ENCODE measurements at regions of chr3 and their contacts with region 1.

Region 1: GRCh38 chr3:109275702-109276293 is 40.5 kb downstream of the DPPA2 start:
- DNase-seq: peak; percentile 42
- ATAC-seq: peak; percentile 91
- H3K4me3 ChIP-seq: no peak overlapping the region
- H3K27ac ChIP-seq: no peak overlapping the region
- H3K4me1 ChIP-seq: no peaks in the 10 kb centered on the region
- H3K27me3 ChIP-seq: no peaks in the 10 kb centered on the region
- CTCF ChIP-seq: peak; percentile 76
- EP300 ChIP-seq: no peak
- POLR2A ChIP-seq: no peak
- RAD21 ChIP-seq: 0 out of 2 replicates have a peak, but pooled peaks have one; percentile 33

Region 2: DNA sequence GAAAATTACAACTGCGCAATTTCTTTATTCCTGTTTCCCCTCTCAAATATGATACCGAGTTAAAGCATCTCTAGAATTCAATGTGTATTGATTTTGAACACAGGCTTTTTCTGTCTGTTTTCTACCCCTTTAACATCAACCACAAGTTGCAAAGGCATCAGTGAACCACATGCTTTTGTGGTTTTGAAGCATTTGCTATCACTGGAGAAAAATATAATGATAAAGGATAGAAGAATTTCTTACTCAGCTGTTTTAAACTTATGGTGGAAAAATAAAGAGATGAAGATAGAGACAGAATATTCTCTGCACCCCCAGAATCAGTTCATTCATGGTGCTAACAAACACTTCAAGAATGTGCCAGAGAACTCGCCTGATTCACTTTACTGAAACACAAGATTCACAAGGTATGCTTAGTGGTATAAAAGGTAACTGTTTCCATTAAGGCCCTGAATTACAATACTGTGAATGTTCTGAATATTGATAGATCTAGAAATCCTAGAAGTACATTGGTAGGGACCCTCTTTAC is 71.0 kb after region 1 on chr3:
- CTCF ChIA-PET with region 1: no interaction called
- POLR2A ChIA-PET with region 1: no interaction called
- in situ Hi-C with region 1: no loop called
- intact Hi-C with region 1: no loop called
- DNase-seq: no peak
- ATAC-seq: no peak
- H3K4me3 ChIP-seq: no peak overlapping the region
- H3K27ac ChIP-seq: no peak overlapping the region
- H3K4me1 ChIP-seq: no peaks in the 10 kb centered on the region
- H3K27me3 ChIP-seq: no peaks in the 10 kb centered on the region; a peak in 1 of 5 replicates
- CTCF ChIP-seq: no peak
- EP300 ChIP-seq: no peak
- POLR2A ChIP-seq: no peak
- RAD21 ChIP-seq: no peak

Region 3: GRCh38 chr3:109369510-109369909 is 93.7 kb after region 1 on chr3:
- CTCF ChIA-PET with region 1: interaction called, 6 read pairs
- POLR2A ChIA-PET with region 1: no interaction called
- in situ Hi-C with region 1: no loop called
- intact Hi-C with region 1: loop called (anchors 1 kb)
- DNase-seq: peak; percentile 7
- ATAC-seq: peak; percentile 90
- H3K4me3 ChIP-seq: no peak overlapping the region
- H3K27ac ChIP-seq: no peak overlapping the region
- H3K4me1 ChIP-seq: no peaks in the 10 kb centered on the region
- H3K27me3 ChIP-seq: no peaks in the 10 kb centered on the region; a peak in 1 of 5 replicates
- CTCF ChIP-seq: no peak
- EP300 ChIP-seq: no peak
- POLR2A ChIP-seq: no peak
- RAD21 ChIP-seq: no peak

Region 4: DNA sequence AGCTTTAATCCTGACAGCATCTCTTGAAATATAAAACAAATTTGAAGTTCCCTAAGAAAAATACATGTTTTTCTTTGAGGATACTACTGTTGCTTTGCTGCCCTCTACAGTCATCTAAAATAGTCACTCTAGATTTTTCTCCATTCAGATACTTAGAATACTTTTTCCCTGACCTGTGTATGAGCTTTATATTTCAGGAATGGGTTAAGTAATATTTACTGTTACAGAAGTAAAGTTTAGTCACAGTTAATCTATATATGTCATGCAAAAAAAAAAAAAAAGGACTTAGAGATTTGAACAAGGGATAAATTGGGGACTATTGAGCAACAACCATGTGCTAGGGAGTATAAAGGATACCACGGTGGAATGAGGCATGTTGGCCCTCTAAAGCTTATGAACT is 1804.6 kb after region 1 on chr3:
- CTCF ChIA-PET with region 1: no interaction called
- POLR2A ChIA-PET with region 1: no interaction called
- in situ Hi-C with region 1: no loop called
- intact Hi-C with region 1: loop called (anchors 10 kb)
- DNase-seq: peak; percentile 39
- ATAC-seq: peak; percentile 63
- H3K4me3 ChIP-seq: no peak overlapping the region
- H3K27ac ChIP-seq: no peak overlapping the region
- H3K4me1 ChIP-seq: peaks cover 34% of the 10 kb centered on the region
- H3K27me3 ChIP-seq: no peaks in the 10 kb centered on the region
- CTCF ChIP-seq: peak; percentile 47
- EP300 ChIP-seq: no peak
- POLR2A ChIP-seq: no peak
- RAD21 ChIP-seq: no peak